CD8-positive, alpha-beta T cell (primary cell): ENCODE measurements at regions of chr1 and their contacts with region 1.

Region 1: DNA sequence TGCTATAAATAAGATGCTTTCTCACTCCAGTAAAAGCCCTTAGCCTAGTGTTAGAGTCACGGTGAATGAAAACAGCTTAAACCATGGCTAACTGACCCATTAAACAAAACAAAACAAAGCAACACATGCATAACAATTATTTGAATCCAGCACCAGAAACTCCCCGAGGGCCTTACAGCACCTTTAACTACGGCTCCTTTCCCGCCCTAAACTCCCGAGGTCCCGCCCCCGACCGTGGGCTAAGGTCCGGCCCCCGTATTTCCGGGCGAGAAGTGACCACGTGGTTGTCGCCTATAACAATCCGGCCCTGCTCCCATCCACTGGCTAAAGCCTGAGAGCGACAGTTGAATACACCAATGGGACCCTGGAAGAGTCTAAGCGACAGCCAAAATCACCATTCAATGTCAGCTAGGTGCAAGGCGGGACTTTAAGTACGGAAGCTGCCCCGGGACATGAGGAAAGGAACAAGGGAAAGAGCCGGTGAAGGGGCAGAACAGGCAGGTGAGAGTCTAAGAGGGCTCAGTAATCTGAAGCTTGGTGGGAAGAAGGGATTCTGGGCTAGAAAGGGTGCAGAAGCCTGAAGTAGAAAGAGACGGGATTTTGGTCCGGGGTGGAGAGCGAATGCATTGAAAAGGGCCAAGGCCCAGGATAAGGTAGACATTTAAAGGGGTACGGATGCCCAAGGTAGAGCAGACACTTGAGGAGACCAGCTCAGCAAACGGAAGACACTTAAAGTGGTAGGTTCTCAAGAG is at the start of gene FLAD1:
- DNase-seq: peak; percentile 86 to 99 (median 94)
- ATAC-seq: peak; percentile 98
- H3K4me3 ChIP-seq: peak within 1 kb of the TSS; percentile 57 to 86
- H3K4me3 Mint-ChIP-seq: no peak within 1 kb of the TSS
- H3K27ac ChIP-seq: peak within 1 kb of the TSS; percentile 51 to 82
- H3K27ac Mint-ChIP-seq: no peak within 1 kb of the TSS
- H3K4me1 ChIP-seq: peaks cover 12% of the 10 kb centered on the region
- H3K4me1 Mint-ChIP-seq: peaks cover 12% of the 10 kb centered on the region
- H3K27me3 ChIP-seq: no peaks in the 10 kb centered on the region
- H3K27me3 Mint-ChIP-seq: no peaks in the 10 kb centered on the region
- CTCF ChIP-seq: no peak
- total RNA-seq, gene FLAD1: 17.4 to 19.0 TPM

Region 2: DNA sequence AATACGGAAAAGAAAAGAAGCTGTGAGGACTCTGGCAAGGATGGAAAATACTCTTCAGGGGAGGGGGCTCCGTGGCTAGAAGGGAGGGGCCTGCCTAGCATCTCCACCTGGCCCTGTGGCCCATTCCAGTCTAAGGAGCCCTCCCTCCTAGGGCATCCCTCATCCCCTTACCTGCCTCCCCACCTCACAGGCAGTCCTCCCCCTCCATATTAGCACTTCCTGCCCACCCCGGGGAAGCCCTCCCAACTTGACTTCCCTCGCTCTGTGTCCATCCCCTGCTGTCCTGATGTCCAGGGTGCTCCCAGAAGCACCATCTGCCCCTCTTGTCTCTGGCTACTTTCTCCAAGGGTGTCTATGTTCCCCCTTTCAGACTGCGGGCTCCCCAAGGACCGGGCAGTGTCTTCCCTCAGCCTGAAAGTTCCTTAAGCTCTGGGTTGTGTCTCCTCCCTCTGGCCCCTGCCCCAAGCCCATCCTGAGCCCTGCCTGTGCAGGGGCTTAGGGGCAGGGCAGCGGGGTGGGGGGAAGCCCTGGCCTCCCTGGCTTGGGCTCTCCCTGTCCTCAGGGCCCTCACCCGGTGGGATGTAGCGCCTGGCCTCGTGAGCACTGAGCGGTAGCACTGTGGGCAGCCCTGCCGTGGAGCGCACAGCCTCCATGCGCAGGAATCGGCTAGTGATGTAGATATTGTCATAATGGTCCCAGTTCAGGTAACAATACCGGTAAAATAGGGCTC is 46.6 kb after region 1 on chr1:
- CTCF ChIA-PET with region 1: no interaction called
- POLR2A ChIA-PET with region 1: no interaction called
- intact Hi-C with region 1: no loop called
- DNase-seq: no peak
- ATAC-seq: no peak
- H3K4me3 ChIP-seq: no peak overlapping the region
- H3K4me3 Mint-ChIP-seq: no peak overlapping the region
- H3K27ac ChIP-seq: no peak overlapping the region
- H3K27ac Mint-ChIP-seq: no peak overlapping the region
- H3K4me1 ChIP-seq: no peaks in the 10 kb centered on the region
- H3K4me1 Mint-ChIP-seq: no peaks in the 10 kb centered on the region
- H3K27me3 ChIP-seq: no peaks in the 10 kb centered on the region
- H3K27me3 Mint-ChIP-seq: peaks cover 2% of the 10 kb centered on the region
- CTCF ChIP-seq: no peak

Region 3: DNA sequence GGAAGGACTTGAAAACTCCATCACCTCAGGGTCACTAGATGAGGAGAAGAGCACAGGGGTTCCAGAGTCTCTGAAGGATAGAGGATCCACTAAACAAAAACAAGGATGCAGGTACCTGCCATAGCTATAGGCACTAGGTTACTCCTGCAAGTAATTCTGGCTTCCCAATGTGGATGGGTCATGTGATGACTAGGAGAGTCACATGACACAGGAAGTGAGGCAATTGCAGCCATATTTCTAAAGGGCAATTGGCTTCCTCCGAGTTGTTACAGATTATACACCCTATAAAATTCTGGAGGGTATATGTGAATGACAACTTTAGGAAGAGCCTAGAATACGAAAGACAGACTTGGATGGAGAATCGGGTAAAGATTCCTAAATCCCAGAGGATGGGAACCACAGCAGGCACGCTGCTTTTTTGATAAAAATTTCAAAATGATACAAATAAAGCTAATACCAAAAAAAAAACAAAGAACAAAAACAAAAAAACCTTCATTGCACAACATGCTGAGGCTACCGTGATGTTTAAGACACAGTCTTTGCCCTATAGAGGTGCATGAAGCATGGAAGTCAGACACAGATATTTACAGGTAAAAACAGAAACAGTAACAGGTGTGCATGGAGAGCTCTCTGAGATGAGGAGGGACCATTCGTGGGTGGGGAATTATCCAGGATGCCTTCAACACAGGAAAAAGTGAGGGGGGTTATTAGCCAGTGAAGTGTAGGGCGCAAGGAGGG is 235.9 kb after region 1 on chr1:
- CTCF ChIA-PET with region 1: no interaction called
- POLR2A ChIA-PET with region 1: interaction called, 10 read pairs
- intact Hi-C with region 1: no loop called
- DNase-seq: peak in 1 of 9 experiments; percentile 59
- ATAC-seq: no peak
- H3K4me3 ChIP-seq: no peak overlapping the region
- H3K4me3 Mint-ChIP-seq: no peak overlapping the region
- H3K27ac ChIP-seq: peak overlapping the region in 1 of 2 experiments; percentile 57
- H3K27ac Mint-ChIP-seq: no peak overlapping the region
- H3K4me1 ChIP-seq: peaks cover 4% of the 10 kb centered on the region
- H3K4me1 Mint-ChIP-seq: peaks cover 10% of the 10 kb centered on the region
- H3K27me3 ChIP-seq: no peaks in the 10 kb centered on the region
- H3K27me3 Mint-ChIP-seq: no peaks in the 10 kb centered on the region
- CTCF ChIP-seq: no peak